ENCODE measurements at regions of chr3 and their contacts with region 1.

Region 1: DNA sequence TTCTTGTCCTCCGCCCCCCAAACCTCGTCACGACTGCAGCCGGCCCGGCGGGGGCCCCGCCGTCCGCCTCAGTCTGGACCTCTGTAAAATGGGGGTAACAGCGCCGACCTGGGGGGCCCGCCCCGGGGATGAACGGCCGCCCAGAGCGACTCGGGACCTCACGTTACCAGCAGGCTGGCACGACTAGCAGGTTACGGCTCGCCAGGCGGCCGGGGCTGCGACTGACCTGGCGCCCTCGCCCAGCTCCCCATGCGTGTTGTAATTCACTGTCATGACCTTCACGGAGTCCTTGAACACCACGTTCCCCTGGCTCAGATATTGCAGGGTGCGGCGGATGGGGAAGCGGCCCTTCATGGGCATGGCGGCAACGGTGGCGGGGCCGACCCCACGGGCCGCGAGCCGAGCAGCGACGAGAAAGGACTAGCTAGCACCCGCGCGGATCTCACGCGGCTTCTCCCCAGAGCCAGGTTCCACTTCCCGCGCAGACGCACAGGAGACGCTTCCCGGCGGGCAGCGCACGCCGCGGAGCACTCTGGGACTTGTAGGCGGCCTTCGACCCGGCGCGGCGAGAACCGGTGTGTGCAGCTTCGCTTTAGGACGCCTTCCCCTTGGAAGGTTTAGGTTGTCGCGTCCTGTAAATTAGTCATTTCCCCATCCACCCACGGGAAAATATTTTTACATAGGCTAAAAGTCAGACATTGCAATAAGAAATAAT is at the start of gene MRPS25:
- DNase-seq: peak; percentile 92 to 93
- ATAC-seq: peak; percentile 96 to 99
- H3K4me3 ChIP-seq: peak within 1 kb of the TSS; percentile 87
- H3K27ac ChIP-seq: peak within 1 kb of the TSS; percentile 92 to 93
- H3K4me1 ChIP-seq: peaks cover 12% of the 10 kb centered on the region
- CTCF ChIP-seq: no peak
- EP300 ChIP-seq: no peak
- POLR2A ChIP-seq: peak; percentile 98
- RAD21 ChIP-seq: no peak
- polyA plus RNA-seq, gene MRPS25: 27.8 and 42.0 TPM in 2 replicates

Region 2: DNA sequence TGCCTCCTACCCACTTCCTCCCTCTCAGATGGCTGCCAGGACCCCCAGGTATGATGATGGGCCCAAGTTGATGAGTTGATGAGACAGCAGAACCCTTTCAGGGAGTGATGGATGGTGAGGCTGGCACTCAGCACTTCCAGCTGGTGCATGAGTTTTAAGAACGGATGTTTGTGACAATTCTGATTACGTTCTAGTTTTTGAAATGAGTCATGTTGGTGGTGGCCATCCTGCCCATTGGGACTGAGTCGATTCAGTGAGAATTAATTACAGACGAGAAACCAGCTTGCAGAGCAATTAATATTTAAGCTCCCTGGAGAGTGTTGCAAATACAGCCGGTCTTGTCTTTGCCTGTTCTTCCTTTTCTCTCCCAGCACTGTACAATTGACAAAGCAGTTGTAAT is 174.5 kb before region 1 on chr3:
- CTCF ChIA-PET with region 1: no interaction called
- POLR2A ChIA-PET with region 1: interaction called, 12 read pairs
- DNase-seq: no peak
- ATAC-seq: no peak
- H3K4me3 ChIP-seq: no peak overlapping the region
- H3K27ac ChIP-seq: no peak overlapping the region
- H3K4me1 ChIP-seq: no peaks in the 10 kb centered on the region
- CTCF ChIP-seq: no peak
- EP300 ChIP-seq: no peak
- POLR2A ChIP-seq: no peak
- RAD21 ChIP-seq: no peak

Region 3: DNA sequence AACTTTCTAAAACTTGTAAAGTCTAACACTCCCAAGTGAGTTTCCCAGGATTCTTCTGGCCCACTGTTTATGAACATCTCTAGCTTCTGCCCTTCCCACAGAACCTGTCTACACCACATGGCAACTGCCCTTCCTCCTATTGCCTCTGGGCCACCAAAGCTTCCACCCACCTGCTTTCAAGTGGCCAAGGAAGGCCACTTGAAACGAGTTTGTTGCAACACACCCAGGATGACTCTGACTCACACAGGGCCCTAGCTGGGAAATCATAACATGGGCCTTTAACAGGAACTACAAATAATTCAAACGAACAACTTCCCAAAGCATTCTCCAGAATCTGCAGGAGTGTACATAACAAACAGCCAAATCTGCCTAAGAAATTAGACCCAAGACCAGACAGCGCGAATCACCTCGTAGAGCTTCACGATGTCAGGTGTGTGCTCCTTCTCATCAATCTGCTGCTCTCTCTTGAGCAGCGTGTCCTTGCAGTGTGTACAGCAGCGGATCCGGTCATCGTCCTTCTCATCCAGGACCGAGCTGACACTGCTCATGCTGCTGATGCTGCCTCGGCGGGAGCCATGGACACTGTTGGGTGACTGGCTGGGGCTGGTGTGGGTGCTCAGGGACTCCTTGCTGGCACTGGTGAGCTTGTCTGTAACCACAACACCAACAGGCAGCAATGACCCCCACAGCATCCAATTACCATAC is 17.1 kb after region 1 on chr3:
- CTCF ChIA-PET with region 1: interaction called, 10 read pairs
- POLR2A ChIA-PET with region 1: no interaction called
- DNase-seq: no peak
- ATAC-seq: peak in 1 of 2 experiments; percentile 58; a peak in 2 of 6 replicates
- H3K4me3 ChIP-seq: no peak overlapping the region
- H3K27ac ChIP-seq: no peak overlapping the region
- H3K4me1 ChIP-seq: no peaks in the 10 kb centered on the region
- CTCF ChIP-seq: no peak
- EP300 ChIP-seq: no peak
- POLR2A ChIP-seq: no peak
- RAD21 ChIP-seq: no peak

Measured in A549 (cell line).